ENCODE measurements at regions of chr12 and their contacts with region 1.

Region 1: GRCh38 chr12:96335270-96335669 is 65.0 kb downstream of the CDK17 start:
- DNase-seq: no peak
- H3K4me3 Mint-ChIP-seq: no peak overlapping the region
- H3K27ac Mint-ChIP-seq: no peak overlapping the region
- H3K4me1 Mint-ChIP-seq: peaks cover 42% of the 10 kb centered on the region
- H3K27me3 Mint-ChIP-seq: no peaks in the 10 kb centered on the region

Region 2: DNA sequence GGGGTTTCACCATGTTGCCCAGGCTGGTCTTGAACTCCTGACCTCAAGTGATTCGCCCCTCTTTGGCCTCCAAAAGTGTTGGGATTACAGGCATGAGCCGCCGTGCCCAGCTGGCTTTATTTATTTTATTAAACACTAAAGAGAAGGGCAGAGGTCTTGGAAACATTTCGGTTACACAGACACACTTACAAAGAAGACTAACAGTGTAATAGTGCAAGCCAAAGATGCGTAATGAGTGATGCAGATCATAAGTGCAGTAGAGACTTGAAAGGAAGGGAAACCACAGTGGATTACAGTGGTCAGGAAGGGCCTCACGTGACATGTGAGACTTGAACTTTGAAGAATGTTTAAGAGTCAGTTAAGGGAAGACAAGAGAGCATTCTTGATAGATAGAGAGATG is 98.8 kb after region 1 on chr12:
- intact Hi-C with region 1: loop called (anchors 1 kb)
- DNase-seq: peak; percentile 75
- H3K4me3 Mint-ChIP-seq: peak overlapping the region; percentile 9
- H3K27ac Mint-ChIP-seq: peak overlapping the region; percentile 32
- H3K4me1 Mint-ChIP-seq: peaks cover 32% of the 10 kb centered on the region
- H3K27me3 Mint-ChIP-seq: peaks cover 6% of the 10 kb centered on the region

Region 3: DNA sequence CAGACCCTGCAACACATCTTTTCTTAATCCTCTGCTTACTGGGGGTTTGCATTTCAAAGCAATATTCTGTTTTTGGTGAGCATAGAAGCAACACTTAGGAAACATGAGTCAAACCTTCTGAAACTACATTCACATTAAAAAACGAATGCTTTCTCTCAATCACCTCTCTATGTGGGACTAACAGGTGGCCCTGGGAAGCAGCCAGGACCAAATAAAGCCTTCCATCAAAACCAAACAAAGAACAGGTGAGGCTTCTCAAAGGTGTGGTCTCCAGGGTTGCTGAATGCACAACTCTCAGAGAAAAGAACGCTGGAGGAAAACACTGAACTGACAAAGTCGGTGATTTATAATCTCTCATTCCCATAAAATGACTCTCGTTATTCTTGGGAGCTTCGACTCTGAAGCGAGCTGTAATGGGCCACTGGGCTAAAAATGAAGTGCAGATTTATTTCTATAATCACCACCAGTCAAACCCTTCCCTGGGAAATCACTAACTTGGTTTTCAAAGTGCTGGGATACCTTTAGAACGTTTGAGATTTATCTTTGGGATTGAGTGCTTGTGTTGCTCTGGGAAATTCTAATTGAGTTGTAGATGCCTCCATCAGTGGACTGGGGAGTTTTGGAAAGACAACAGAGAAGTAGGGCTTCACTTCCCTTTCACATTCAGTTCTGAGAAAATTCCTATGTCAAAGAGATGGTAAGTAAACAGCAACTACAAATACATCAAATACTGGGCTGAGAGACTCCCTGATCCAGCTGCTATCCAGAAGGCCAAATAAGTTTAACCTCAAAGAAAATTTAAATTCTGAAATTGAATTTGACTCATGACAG is 1918.2 kb after region 1 on chr12:
- intact Hi-C with region 1: no loop called
- DNase-seq: no peak
- H3K4me3 Mint-ChIP-seq: no peak overlapping the region
- H3K27ac Mint-ChIP-seq: no peak overlapping the region
- H3K4me1 Mint-ChIP-seq: no peaks in the 10 kb centered on the region
- H3K27me3 Mint-ChIP-seq: peaks cover 2% of the 10 kb centered on the region